Activated B cell treated with CpG ODN at 0.5 μM for 24 hours (primary cell): ENCODE measurements at regions of chr1 and their contacts with region 1.

Region 1: GRCh38 chr1:169485544-169486278 is at the start of gene SLC19A2:
- DNase-seq: peak; percentile 86
- ATAC-seq: peak; percentile 98
- H3K4me3 Mint-ChIP-seq: peak within 1 kb of the TSS; percentile 88
- H3K27ac Mint-ChIP-seq: peak within 1 kb of the TSS; percentile 82
- H3K4me1 Mint-ChIP-seq: peaks cover 27% of the 10 kb centered on the region
- H3K27me3 Mint-ChIP-seq: no peaks in the 10 kb centered on the region
- CTCF ChIP-seq: no peak
- total RNA-seq, gene SLC19A2: 3.0 and 3.6 TPM in 2 replicates

Region 2: GRCh38 chr1:168719306-168720111 is 766.2 kb before region 1 on chr1:
- CTCF ChIA-PET with region 1: no interaction called
- POLR2A ChIA-PET with region 1: no interaction called
- intact Hi-C with region 1: no loop called
- DNase-seq: no peak
- ATAC-seq: no peak
- H3K4me3 Mint-ChIP-seq: no peak overlapping the region
- H3K27ac Mint-ChIP-seq: no peak overlapping the region
- H3K4me1 Mint-ChIP-seq: no peaks in the 10 kb centered on the region
- H3K27me3 Mint-ChIP-seq: no peaks in the 10 kb centered on the region
- CTCF ChIP-seq: no peak

Region 3: DNA sequence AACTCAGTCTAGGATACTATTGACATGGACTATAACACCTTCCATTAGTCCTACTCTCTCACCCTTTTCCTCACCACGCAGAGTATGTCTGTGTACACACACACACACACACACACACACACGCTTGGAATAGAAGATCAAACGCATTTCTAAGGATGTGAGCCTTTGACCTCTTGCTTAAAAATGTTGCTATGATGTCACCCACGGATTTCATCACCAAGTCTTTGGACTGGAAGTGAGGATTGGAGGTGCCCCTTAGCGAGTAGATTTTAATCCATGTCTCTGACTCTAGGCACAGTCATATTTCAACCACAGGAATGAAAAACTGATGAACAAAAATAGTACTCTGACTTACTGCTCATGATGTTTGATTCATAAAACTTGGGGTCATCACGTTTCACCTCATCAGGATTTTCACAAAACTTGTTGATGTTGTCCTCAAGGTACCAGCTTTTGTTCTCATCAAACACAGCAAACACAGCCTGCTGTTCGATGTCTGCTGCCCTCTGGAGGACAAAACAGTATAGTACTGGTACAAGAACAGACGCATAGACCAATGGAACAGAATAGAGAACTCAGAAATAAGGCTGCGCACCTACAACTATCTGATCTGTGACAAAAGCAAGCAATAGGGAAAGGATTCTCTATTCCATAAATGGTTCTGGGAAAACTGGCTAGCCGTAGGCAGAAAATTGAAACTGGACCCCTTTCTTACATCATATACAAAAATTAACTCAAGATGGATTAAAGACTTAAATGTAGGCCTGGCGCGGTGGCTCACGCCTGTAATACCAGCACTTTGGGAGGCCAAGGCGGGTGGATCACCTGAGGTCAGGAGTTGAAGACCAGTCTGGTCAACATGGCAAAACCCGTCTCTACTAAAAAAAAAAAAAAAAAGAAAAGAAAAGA is 60.6 kb after region 1 on chr1:
- CTCF ChIA-PET with region 1: interaction called, 5 read pairs
- POLR2A ChIA-PET with region 1: no interaction called
- intact Hi-C with region 1: loop called (anchors 1 kb)
- DNase-seq: no peak
- ATAC-seq: peak; percentile 78
- H3K4me3 Mint-ChIP-seq: no peak overlapping the region
- H3K27ac Mint-ChIP-seq: no peak overlapping the region
- H3K4me1 Mint-ChIP-seq: no peaks in the 10 kb centered on the region
- H3K27me3 Mint-ChIP-seq: peaks cover 3% of the 10 kb centered on the region
- CTCF ChIP-seq: peak; percentile 73

Region 4: DNA sequence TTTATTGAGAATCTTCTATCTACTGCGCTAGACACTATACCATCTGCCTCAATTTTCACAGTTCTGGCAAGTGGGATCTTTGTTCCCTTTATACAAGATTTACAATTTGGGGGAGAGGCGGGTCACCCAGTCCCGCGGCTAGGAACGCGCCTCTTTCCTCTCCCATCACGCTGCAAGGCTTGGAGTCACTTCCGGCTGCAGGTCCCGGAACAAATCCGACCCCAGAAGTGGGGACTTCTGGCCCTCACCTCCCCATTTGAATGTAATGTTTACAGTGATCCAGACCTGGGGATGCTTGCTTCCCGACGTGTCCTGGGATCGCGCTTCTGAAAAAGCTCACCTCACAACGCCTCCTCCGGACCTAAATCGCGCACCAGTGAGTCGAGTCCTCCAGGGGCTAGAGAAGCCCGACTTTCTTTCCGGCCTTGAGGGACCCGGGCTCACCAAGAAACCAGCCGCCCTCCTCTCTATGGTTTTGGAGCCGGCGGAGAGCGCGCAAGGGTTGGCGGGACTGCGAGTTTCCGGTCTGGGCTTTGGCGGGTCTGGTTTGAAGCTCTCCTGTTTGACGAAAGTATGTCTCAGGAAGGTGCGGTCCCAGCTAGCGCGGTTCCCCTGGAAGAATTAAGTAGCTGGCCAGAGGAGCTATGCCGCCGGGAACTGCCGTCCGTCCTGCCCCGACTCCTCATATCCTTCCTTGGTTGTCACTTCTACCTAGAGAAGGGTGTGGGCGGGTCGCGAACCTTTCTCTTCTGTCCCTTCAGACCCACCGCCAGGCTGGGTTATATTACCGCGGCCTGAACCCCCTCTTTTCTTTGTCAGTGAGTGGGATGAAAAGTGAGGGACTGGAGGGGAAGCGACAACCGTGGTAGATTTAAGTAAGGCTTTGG is 309.1 kb after region 1 on chr1 and contains the start of gene METTL18:
- CTCF ChIA-PET with region 1: no interaction called
- POLR2A ChIA-PET with region 1: interaction called, 3 read pairs
- intact Hi-C with region 1: loop called (anchors 1 kb)
- DNase-seq: peak; percentile 77
- ATAC-seq: peak; percentile 98
- H3K4me3 Mint-ChIP-seq: peak within 1 kb of the TSS; percentile 100
- H3K27ac Mint-ChIP-seq: peak within 1 kb of the TSS; percentile 99
- H3K4me1 Mint-ChIP-seq: peaks cover 50% of the 10 kb centered on the region
- H3K27me3 Mint-ChIP-seq: no peaks in the 10 kb centered on the region
- CTCF ChIP-seq: no peak
- total RNA-seq, gene METTL18: 12.0 and 14.5 TPM in 2 replicates

Region 5: DNA sequence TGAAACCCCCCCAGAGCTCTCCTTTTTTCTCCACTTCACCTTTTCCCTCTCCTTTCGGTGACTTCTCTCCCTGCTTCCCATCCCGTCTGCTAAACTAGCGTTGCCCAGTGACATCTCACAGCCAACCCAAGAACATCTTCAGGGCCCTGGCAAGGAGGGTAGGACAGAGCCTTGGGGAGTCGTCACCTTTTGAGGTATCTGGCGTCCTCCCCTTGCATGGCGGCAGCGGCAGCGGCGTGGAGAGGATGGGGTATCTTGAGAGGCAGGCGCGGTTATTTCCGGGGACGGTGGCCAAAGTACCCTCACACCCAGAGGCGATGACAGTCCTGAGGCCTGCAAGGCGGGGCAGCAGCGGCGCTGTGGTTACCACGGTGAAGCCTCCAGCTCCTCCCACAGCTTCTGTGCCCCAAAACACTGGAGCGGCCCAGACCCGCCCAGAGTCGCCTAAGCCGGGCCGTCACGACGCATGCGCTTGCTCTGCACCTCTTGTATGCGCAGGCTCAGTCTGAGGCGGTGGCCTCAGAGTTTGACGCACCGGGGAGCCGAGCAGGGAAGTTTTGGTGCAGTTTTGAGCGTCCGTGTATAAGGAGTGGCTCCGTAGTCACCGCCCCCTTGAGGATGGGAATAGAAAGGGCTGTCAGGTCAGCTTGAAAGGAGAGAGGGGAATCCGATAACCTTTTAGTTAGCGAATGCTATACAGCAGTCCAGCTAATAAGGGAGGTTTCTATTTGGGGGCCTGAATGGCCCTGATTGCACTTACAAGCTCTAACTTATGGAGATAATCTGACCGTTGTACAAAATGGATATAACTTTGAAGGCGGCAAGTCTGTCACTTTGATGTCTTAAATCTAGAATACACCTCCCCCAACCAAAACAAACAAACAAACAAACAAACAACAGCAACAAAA is 588.8 kb after region 1 on chr1 and contains the start of gene KIFAP3:
- CTCF ChIA-PET with region 1: no interaction called
- POLR2A ChIA-PET with region 1: no interaction called
- intact Hi-C with region 1: loop called (anchors 5 kb)
- DNase-seq: peak; percentile 89
- ATAC-seq: peak; percentile 93
- H3K4me3 Mint-ChIP-seq: peak within 1 kb of the TSS; percentile 94
- H3K27ac Mint-ChIP-seq: peak within 1 kb of the TSS; percentile 87
- H3K4me1 Mint-ChIP-seq: peaks cover 52% of the 10 kb centered on the region
- H3K27me3 Mint-ChIP-seq: peaks cover 2% of the 10 kb centered on the region
- CTCF ChIP-seq: no peak
- total RNA-seq, gene KIFAP3: 11.8 and 12.7 TPM in 2 replicates